HCT116 (cell line): ENCODE measurements at regions of chr3 and their contacts with region 1.

Region 1: GRCh38 chr3:58324391-58325390 is 8.0 kb upstream of the PXK start:
- DNase-seq: no peak
- ATAC-seq: no peak
- H3K4me3 ChIP-seq: no peak overlapping the region
- H3K27ac ChIP-seq: no peak overlapping the region
- H3K4me1 ChIP-seq: no peaks in the 10 kb centered on the region
- H3K27me3 ChIP-seq: no peaks in the 10 kb centered on the region
- CTCF ChIP-seq: no peak
- POLR2A ChIP-seq: no peak
- RAD21 ChIP-seq: no peak

Region 2: GRCh38 chr3:58414538-58415197 is 90.0 kb after region 1 on chr3:
- CTCF ChIA-PET with region 1: interaction called, 4 read pairs
- POLR2A ChIA-PET with region 1: no interaction called
- RAD21 ChIA-PET with region 1: no interaction called
- intact Hi-C with region 1: loop called (anchors 1 kb)
- DNase-seq: peak; percentile 44
- ATAC-seq: peak; percentile 86
- H3K4me3 ChIP-seq: no peak overlapping the region
- H3K27ac ChIP-seq: no peak overlapping the region
- H3K4me1 ChIP-seq: peaks cover 2 to 3% of the 10 kb centered on the region in 2 experiments; a peak in 3 of 4 replicates
- H3K27me3 ChIP-seq: no peaks in the 10 kb centered on the region
- CTCF ChIP-seq: peak; percentile 66 to 87 (median 80)
- POLR2A ChIP-seq: no peak
- RAD21 ChIP-seq: peak; percentile 74